ENCODE measurements at regions of chr3 and their contacts with region 1.

Region 1: GRCh38 chr3:58305882-58306711 is at the starts of genes HTD2 and RPP14:
- DNase-seq: peak; percentile 100
- H3K4me3 Mint-ChIP-seq: peak within 1 kb of the TSS; percentile 98
- H3K27ac Mint-ChIP-seq: peak within 1 kb of the TSS; percentile 99
- H3K4me1 Mint-ChIP-seq: peaks cover 22% of the 10 kb centered on the region
- H3K27me3 Mint-ChIP-seq: peaks cover 10% of the 10 kb centered on the region
- total RNA-seq, gene HTD2: 9.7 and 11.5 TPM in 2 replicates
- total RNA-seq, gene RPP14: 22.7 and 25.2 TPM in 2 replicates

Region 2: DNA sequence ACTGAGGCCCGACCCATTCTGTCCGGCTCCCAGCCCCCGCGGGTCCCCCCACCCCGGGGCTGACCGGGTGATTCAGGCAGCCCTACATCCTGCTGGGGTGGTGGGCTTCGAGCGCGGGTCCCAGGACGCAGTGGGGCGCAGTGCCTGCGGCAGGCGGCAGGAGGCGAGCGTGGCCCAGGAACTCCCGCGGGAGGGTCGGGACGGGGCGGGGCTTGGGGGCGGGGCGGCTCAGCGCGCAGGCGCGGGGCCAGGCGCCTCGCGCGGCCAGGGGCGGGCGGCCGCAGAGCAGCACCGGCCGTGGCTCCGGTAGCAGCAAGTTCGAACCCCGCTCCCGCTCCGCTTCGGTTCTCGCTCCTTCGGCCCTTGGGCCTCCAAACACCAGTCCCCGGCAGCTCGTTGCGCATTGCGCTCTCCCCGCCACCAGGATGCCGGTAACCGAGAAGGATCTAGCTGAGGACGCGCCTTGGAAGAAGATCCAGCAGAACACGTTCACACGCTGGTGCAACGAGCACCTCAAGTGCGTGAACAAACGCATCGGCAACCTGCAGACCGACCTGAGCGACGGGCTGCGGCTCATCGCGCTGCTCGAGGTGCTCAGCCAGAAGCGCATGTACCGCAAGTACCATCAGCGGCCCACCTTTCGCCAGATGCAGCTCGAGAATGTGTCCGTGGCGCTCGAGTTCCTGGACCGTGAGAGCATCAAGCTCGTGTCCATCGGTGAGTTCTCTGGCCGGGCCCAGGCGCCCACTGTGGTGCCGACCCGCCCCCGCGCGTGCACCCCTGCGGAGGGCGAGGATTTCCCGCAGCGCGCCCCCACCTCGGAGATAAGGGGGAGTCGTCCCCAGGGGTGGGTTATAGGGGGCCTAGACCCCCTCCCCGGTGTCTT is 297.7 kb before region 1 on chr3 and contains the start of gene FLNB:
- intact Hi-C with region 1: loop called (anchors 10 kb)
- DNase-seq: peak; percentile 93
- H3K4me3 Mint-ChIP-seq: peak within 1 kb of the TSS; percentile 91
- H3K27ac Mint-ChIP-seq: peak within 1 kb of the TSS; percentile 87
- H3K4me1 Mint-ChIP-seq: peaks cover 33% of the 10 kb centered on the region
- H3K27me3 Mint-ChIP-seq: no peaks in the 10 kb centered on the region
- total RNA-seq, gene FLNB: 22.8 and 23.9 TPM in 2 replicates

Region 3: GRCh38 chr3:58249358-58250092 is 56.6 kb before region 1 on chr3:
- intact Hi-C with region 1: no loop called
- DNase-seq: no peak
- H3K4me3 Mint-ChIP-seq: no peak overlapping the region
- H3K27ac Mint-ChIP-seq: no peak overlapping the region
- H3K4me1 Mint-ChIP-seq: peaks cover 5% of the 10 kb centered on the region
- H3K27me3 Mint-ChIP-seq: no peaks in the 10 kb centered on the region

Region 4: GRCh38 chr3:58324391-58325390 is 18.6 kb after region 1 on chr3:
- intact Hi-C with region 1: loop called (anchors 1 kb)
- DNase-seq: peak; percentile 73
- H3K4me3 Mint-ChIP-seq: peak overlapping the region; percentile 67
- H3K27ac Mint-ChIP-seq: peak overlapping the region; percentile 90
- H3K4me1 Mint-ChIP-seq: peaks cover 28% of the 10 kb centered on the region
- H3K27me3 Mint-ChIP-seq: no peaks in the 10 kb centered on the region

Region 5: DNA sequence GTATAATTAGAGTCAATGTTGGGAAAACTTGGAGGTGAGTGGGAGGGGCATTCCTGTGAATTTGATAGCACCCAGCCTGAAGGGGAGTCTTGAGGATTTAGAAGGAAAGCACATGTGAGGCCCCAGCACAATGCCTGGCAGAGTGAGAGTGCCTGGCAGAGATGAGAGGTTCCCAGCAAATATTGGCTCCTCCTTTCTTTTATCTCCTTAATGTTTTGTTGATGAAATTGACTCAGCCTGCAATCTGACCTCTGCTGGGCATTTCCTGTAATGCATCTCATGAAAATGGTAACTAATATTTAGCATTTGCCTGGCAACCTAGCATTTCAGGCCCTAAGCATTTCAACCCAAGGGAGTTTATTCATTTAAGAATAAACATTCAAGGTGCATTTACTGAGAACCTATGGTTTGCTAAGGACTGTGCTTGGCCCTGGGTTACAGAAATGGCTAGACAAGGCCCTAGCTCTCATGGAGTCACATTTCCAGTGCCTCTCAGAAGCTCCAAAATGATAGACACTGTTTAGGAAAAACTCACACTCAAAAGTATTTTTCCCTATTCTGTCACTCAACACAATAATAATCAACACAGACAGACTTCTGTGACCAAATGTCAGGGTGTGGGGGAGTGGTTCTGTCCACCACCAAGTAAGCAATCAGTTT is 108.6 kb after region 1 on chr3:
- intact Hi-C with region 1: loop called (anchors 1 kb)
- DNase-seq: peak; percentile 89
- H3K4me3 Mint-ChIP-seq: no peak overlapping the region
- H3K27ac Mint-ChIP-seq: no peak overlapping the region
- H3K4me1 Mint-ChIP-seq: peaks cover 5% of the 10 kb centered on the region
- H3K27me3 Mint-ChIP-seq: no peaks in the 10 kb centered on the region

Region 6: GRCh38 chr3:58491506-58492402 is 185.7 kb after region 1 on chr3 and contains the start of gene KCTD6:
- intact Hi-C with region 1: loop called (anchors 1 kb)
- DNase-seq: peak; percentile 97
- H3K4me3 Mint-ChIP-seq: peak within 1 kb of the TSS; percentile 91
- H3K27ac Mint-ChIP-seq: peak within 1 kb of the TSS; percentile 86
- H3K4me1 Mint-ChIP-seq: peaks cover 24% of the 10 kb centered on the region
- H3K27me3 Mint-ChIP-seq: peaks cover 44% of the 10 kb centered on the region
- total RNA-seq, gene KCTD6: 5.8 and 6.3 TPM in 2 replicates

Measured in activated CD4-positive, alpha-beta T cell treated with anti-CD3 and anti-CD28 coated beads, Interleukin-2, amount 10 ng/mL, durations not matched to agents 24 days and 14 days (primary cell).